Activated CD4-positive, alpha-beta T cell treated with anti-CD3 and anti-CD28 coated beads for 36 hours (primary cell): ENCODE measurements at regions of chr12 and their contacts with region 1.

Region 1: GRCh38 chr12:19833775-19834501 is 394.6 kb downstream of the AEBP2 start:
- DNase-seq: peak; percentile 63
- ATAC-seq: peak; percentile 92
- H3K4me3 Mint-ChIP-seq: no peak overlapping the region
- H3K27ac Mint-ChIP-seq: peak overlapping the region; percentile 10
- H3K4me1 Mint-ChIP-seq: peaks cover 28% of the 10 kb centered on the region
- H3K27me3 Mint-ChIP-seq: no peaks in the 10 kb centered on the region

Region 2: GRCh38 chr12:19547271-19547671 is 286.7 kb before region 1 on chr12:
- CTCF ChIA-PET with region 1: no interaction called
- POLR2A ChIA-PET with region 1: no interaction called
- intact Hi-C with region 1: loop called in 1 of 2 experiments (anchors 1 kb)
- DNase-seq: no peak
- ATAC-seq: no peak
- H3K4me3 Mint-ChIP-seq: no peak overlapping the region
- H3K27ac Mint-ChIP-seq: no peak overlapping the region
- H3K4me1 Mint-ChIP-seq: peaks cover 8% of the 10 kb centered on the region
- H3K27me3 Mint-ChIP-seq: no peaks in the 10 kb centered on the region

Region 3: GRCh38 chr12:19675361-19675760 is 158.6 kb before region 1 on chr12:
- CTCF ChIA-PET with region 1: no interaction called
- POLR2A ChIA-PET with region 1: no interaction called
- intact Hi-C with region 1: loop called (anchors 1 to 10 kb)
- DNase-seq: no peak
- ATAC-seq: peak; percentile 89
- H3K4me3 Mint-ChIP-seq: no peak overlapping the region
- H3K27ac Mint-ChIP-seq: no peak overlapping the region
- H3K4me1 Mint-ChIP-seq: peaks cover 24% of the 10 kb centered on the region
- H3K27me3 Mint-ChIP-seq: no peaks in the 10 kb centered on the region

Region 4: DNA sequence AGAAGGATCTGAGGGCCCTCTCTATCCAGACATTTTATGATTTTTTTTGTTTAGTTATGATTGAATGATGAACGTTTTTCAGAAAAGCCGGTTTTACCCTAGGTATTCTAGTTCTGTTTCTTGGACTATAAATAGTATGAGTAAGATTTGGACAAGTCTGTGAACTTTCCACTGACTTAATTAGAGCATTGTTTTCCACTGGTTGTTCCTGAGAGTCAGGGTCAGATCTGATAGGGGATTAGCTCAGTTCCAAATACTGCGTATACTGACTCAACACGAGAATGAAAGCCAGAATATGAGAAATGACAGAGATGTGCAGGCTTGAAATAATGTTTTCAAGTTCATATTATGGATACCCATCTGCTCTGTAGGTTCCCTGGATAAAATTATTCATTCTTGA is 33.1 kb before region 1 on chr12:
- CTCF ChIA-PET with region 1: no interaction called
- POLR2A ChIA-PET with region 1: no interaction called
- intact Hi-C with region 1: loop called (anchors 1 to 2 kb)
- DNase-seq: no peak
- ATAC-seq: peak; percentile 97
- H3K4me3 Mint-ChIP-seq: no peak overlapping the region
- H3K27ac Mint-ChIP-seq: peak overlapping the region; percentile 58
- H3K4me1 Mint-ChIP-seq: peaks cover 18% of the 10 kb centered on the region
- H3K27me3 Mint-ChIP-seq: no peaks in the 10 kb centered on the region

Region 5: GRCh38 chr12:19894803-19895202 is 60.9 kb after region 1 on chr12:
- CTCF ChIA-PET with region 1: no interaction called
- POLR2A ChIA-PET with region 1: no interaction called
- intact Hi-C with region 1: loop called (anchors 1 kb)
- DNase-seq: no peak
- ATAC-seq: peak; percentile 89
- H3K4me3 Mint-ChIP-seq: no peak overlapping the region
- H3K27ac Mint-ChIP-seq: peak overlapping the region; percentile 86
- H3K4me1 Mint-ChIP-seq: peaks cover 14% of the 10 kb centered on the region
- H3K27me3 Mint-ChIP-seq: peaks cover 2% of the 10 kb centered on the region